Dorsolateral prefrontal cortex (tissue), 120 donors: ENCODE measurements at regions of chr2 and their contacts with region 1.

Region 1: GRCh38 chr2:96760036-96760985 is at the start of gene CNNM4:
- DNase-seq: peak; percentile 88 to 99 (median 93)
- H3K4me3 ChIP-seq: peak within 1 kb of the TSS; percentile 53 to 88 (median 77)
- H3K27ac ChIP-seq: peak within 1 kb of the TSS in 58 of 59 donors; percentile 16 to 92 (median 82)
- H3K27me3 ChIP-seq: no peaks in the 10 kb centered on the region
- CTCF ChIP-seq: peak in 38 of 56 donors; percentile 4 to 66 (median 39)
- total RNA-seq, gene CNNM4: 9.3 to 21.2 (median 13.1) TPM

Region 2: DNA sequence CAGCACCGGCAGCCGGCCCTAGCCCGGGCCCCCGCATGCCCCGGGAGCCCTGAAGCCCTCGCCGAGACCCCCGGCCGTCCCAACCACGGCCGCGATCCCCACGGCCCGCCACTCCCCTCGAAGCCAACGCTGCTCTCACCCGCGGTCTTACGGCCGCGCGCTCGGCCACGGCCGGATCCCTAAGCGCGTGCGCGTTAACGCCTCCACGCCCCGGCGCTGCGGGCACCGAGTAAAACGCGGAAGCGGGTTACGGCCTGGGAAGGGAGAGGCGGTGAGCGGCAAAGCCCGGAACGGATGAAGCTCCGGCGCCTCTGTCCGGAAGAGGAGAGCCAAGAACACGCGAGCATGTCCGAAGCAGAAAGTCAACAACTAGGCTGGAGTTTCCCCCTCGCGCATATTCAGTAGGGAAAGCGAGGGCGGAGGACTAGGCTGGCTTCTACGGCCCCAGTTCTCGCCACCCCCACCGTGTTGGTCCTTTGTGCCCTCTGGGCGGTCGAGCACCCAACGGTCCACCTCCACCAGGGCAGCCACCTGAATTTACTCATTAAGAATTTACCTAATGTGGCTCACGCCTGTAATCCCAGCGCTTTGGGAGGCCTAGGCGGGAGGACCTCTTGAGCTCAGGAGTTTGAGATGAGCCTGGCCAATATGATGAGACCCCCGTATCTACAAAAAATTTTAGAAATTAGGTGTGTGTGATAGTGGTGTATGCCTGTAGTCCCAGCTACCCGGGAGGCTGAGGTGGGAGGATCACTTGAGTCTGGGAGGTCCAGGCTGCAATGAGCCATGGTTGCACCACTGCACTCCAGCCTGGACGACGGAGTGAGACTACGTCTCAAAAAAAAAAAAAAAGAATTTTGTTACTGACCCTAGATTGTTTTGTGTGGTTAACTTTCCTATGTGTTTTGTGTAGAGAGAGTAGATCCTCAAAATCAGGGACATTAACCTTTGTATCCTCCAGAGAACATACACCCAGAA is 121.9 kb before region 1 on chr2 and contains the start of gene KANSL3:
- intact Hi-C with region 1: loop called (anchors 1 to 5 kb)
- DNase-seq: peak; percentile 73 to 92 (median 82)
- H3K4me3 ChIP-seq: peak within 1 kb of the TSS; percentile 57 to 95 (median 83)
- H3K27ac ChIP-seq: peak within 1 kb of the TSS in 56 of 59 donors; percentile 18 to 95 (median 84)
- H3K27me3 ChIP-seq: no peaks in the 10 kb centered on the region
- CTCF ChIP-seq: peak in 31 of 56 donors; percentile 6 to 58 (median 26)
- total RNA-seq, gene KANSL3: 39.7 to 81.1 (median 55.0) TPM

Region 3: DNA sequence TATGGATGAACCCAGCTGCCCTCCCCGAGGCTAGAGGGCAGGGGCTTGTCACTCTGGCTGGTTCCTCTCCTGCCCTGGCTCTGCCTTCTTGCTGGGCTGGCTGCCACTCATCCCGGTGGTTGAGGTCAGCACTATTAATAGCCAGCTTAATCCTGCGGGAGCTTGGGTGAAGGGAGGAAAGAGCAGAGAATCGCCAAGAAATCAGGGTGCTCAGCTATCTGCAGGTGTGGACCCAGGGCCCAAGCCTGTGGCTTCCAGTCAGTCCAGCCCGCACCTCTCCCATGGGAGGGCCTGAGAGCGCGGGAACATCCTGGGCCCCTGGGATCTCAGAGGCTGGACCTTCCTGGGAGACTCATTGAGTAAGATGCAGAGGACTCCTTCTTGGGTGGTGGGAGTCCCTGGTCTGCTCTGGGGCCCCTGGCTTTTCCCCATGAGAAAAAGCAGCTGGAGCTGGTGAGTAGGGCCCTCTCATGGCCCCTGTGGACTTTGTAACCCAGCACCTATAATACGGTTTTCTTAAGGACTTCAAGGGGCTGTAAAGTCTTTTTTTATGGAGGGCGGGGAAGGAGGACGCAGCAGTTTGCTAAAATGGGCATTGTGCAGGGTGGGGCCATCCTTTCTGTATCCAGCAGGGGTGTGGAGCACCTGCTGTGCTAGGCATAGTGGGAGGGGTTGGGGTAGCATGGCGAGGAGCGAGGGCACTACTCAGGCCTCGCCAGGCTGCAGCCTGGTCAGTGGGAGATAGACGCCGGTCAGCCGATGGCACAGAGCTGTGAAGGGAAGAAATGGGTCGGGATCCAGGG is 28.3 kb after region 1 on chr2:
- intact Hi-C with region 1: loop called in 1 of 2 experiments (anchors 1 kb)
- DNase-seq: peak in 8 of 10 donors; percentile 32 to 78 (median 56)
- H3K4me3 ChIP-seq: peak overlapping the region in 1 of 59 donors; percentile 16
- H3K27ac ChIP-seq: peak overlapping the region in 52 of 59 donors; percentile 19 to 81 (median 70)
- H3K27me3 ChIP-seq: no peaks in the 10 kb centered on the region
- CTCF ChIP-seq: no peak

Region 4: DNA sequence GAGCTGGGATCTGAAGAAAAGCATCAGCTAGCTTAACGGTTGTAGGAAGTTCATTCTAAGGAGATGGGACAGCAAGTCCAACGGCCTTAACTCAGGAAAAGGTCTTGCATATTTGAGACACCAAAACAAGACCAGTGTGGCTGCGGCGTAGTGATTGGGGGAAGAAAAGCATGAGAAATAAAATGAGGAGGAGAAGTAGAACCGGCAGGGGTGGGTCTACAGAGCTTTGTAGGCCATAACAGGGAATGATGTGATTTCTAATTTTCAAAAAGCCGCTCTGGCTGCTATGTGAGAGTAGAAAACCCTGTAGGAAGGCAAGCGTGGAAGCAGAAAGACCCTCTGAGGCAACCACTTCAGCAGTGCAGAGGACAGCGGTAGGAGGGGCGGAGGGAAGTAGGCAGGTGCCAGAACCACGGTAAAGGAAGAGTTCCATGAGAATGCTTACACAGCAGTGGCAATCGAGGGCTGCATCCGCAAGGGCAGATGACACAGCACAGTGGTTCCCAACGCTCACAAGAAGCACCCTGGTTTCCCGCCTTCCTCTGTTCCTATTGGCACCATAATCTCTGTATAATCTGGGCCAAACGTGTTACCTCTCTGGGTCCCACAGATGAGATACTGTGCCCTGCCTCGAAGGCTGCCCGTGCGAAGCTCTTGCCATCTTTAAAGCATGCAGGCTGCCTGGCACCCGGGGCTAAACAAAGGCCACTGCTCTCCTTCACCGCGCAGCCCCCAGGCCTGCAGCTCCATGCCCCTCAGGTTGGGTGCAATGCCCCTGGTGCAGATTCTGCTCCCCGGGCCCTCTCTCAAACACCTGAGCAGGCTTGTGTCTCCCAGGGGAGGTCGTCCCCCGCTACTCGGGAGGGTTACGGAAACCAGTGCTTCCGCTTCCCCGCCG is 96.7 kb after region 1 on chr2:
- intact Hi-C with region 1: loop called (anchors 5 to 10 kb)
- DNase-seq: peak in 3 of 10 donors; percentile 29 to 61 (median 45)
- H3K4me3 ChIP-seq: peak overlapping the region; percentile 55 to 100 (median 87)
- H3K27ac ChIP-seq: peak overlapping the region; percentile 36 to 95 (median 90)
- H3K27me3 ChIP-seq: no peaks in the 10 kb centered on the region
- CTCF ChIP-seq: peak in 1 of 56 donors; percentile 9

Region 5: GRCh38 chr2:96960153-96960961 is 200.0 kb after region 1 on chr2:
- intact Hi-C with region 1: loop called in 1 of 2 experiments (anchors 5 kb)
- DNase-seq: peak; percentile 89 to 96 (median 90)
- H3K4me3 ChIP-seq: peak overlapping the region in 2 of 59 donors; percentile 7
- H3K27ac ChIP-seq: peak overlapping the region in 34 of 59 donors; percentile 1 to 78 (median 48)
- H3K27me3 ChIP-seq: no peaks in the 10 kb centered on the region
- CTCF ChIP-seq: peak; percentile 60 to 98 (median 93)